Activated CD4-positive, alpha-beta T cell treated with anti-CD3 and anti-CD28 coated beads, Interleukin-2, amount 10 ng/mL, durations not matched to agents 7 days and 5 days (primary cell): ENCODE measurements at regions of chr19 and their contacts with region 1.

Region 1: GRCh38 chr19:42423462-42424344 is 3.5 kb downstream of the LIPE start:
- DNase-seq: peak; percentile 95
- H3K4me3 Mint-ChIP-seq: peak overlapping the region; percentile 95
- H3K27ac Mint-ChIP-seq: peak overlapping the region; percentile 90
- H3K4me1 Mint-ChIP-seq: peaks cover 43% of the 10 kb centered on the region
- H3K27me3 Mint-ChIP-seq: no peaks in the 10 kb centered on the region

Region 2: GRCh38 chr19:42283143-42284065 is 140.3 kb before region 1 on chr19:
- CTCF ChIA-PET with region 1: no interaction called
- POLR2A ChIA-PET with region 1: no interaction called
- DNase-seq: peak; percentile 97
- H3K4me3 Mint-ChIP-seq: no peak overlapping the region
- H3K27ac Mint-ChIP-seq: no peak overlapping the region
- H3K4me1 Mint-ChIP-seq: peaks cover 46% of the 10 kb centered on the region
- H3K27me3 Mint-ChIP-seq: no peaks in the 10 kb centered on the region

Region 3: DNA sequence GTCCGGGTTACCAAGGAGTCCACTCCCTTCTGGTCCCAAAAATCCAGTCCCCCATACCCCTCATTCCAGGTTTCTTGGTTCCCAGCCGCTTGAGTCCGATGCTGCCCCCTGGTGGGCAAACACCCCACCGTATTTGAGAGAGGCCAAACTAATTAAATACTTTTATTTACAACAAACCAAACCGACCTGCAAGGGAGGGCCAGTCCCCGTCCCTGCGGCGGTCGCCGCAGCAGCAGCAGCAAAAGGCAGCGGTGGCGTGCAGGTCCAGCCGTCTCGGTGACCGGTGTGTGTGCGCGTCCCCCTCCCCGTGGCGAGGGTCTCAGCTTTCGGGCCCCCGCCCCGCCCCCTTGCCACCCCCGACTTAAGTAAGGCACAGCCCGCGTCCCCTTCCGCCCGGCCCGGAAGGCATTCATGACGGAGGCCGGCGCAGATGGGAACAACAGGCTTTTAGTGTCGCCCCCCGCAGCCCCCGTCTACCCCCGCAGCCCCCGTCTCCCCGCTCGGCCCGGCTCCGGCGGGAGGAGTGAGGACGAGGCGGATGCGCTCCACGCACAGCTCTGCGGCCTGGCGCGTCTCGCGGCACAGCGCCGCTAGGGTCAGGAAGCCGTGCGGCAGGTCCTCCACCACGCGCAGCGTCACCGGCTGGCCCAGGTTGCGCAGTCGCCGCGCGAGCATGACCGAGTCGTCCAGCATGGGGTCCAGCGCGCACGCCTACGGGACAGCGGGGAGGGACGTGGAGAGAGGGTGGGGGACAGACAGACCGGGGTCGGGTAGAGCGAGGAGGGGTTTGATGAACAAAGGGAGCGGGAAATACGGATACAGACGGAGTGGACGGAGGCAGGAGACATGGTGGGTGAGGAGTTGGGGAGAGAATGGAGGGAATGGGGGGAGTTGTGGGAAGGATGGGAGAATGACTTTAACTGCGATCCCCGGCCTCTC is 22.1 kb before region 1 on chr19:
- CTCF ChIA-PET with region 1: interaction called, 12 read pairs
- POLR2A ChIA-PET with region 1: no interaction called
- DNase-seq: peak; percentile 69
- H3K4me3 Mint-ChIP-seq: peak overlapping the region; percentile 67
- H3K27ac Mint-ChIP-seq: peak overlapping the region; percentile 57
- H3K4me1 Mint-ChIP-seq: peaks cover 39% of the 10 kb centered on the region
- H3K27me3 Mint-ChIP-seq: no peaks in the 10 kb centered on the region

Region 4: GRCh38 chr19:42407085-42407815 is 16.5 kb before region 1 on chr19:
- CTCF ChIA-PET with region 1: interaction called, 12 read pairs
- POLR2A ChIA-PET with region 1: no interaction called
- DNase-seq: no peak
- H3K4me3 Mint-ChIP-seq: no peak overlapping the region
- H3K27ac Mint-ChIP-seq: no peak overlapping the region
- H3K4me1 Mint-ChIP-seq: peaks cover 2% of the 10 kb centered on the region
- H3K27me3 Mint-ChIP-seq: no peaks in the 10 kb centered on the region

Region 5: GRCh38 chr19:42440357-42441048 is 16.8 kb after region 1 on chr19:
- CTCF ChIA-PET with region 1: interaction called, 25 read pairs
- POLR2A ChIA-PET with region 1: interaction called, 3 read pairs
- DNase-seq: peak; percentile 83
- H3K4me3 Mint-ChIP-seq: no peak overlapping the region
- H3K27ac Mint-ChIP-seq: no peak overlapping the region
- H3K4me1 Mint-ChIP-seq: peaks cover 33% of the 10 kb centered on the region
- H3K27me3 Mint-ChIP-seq: peaks cover 2% of the 10 kb centered on the region

Region 6: DNA sequence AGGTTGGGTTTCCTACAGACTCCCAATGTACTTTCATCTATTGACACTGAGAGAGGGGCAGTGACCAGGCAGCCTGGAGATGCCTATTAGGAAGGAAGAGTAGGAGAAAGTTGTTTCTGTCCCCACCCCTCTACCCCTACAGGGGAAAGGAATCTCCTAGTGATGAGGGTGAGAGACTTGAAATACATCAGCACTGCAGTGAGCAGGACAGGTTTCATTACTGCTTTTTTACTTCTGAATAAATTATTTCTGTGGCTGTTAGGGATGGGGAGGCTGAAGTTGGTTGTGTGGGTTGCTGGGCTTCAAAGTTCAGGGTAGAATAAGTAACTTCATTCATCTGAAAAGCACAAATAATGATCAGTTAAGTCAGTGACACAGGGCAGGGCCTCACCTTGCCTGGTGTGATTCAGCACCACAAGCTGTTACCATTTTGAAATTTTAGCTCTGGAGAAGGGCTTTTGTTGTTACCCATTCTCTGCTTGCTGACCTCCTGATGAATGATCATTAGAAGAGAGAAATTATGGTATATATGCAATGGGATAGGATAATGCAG is 85.3 kb after region 1 on chr19:
- CTCF ChIA-PET with region 1: no interaction called
- POLR2A ChIA-PET with region 1: no interaction called
- DNase-seq: no peak
- H3K4me3 Mint-ChIP-seq: no peak overlapping the region
- H3K27ac Mint-ChIP-seq: no peak overlapping the region
- H3K4me1 Mint-ChIP-seq: peaks cover 33% of the 10 kb centered on the region
- H3K27me3 Mint-ChIP-seq: no peaks in the 10 kb centered on the region